CD4-positive, alpha-beta T cell (primary cell): ENCODE measurements at regions of chr19 and their contacts with region 1.

Region 1: DNA sequence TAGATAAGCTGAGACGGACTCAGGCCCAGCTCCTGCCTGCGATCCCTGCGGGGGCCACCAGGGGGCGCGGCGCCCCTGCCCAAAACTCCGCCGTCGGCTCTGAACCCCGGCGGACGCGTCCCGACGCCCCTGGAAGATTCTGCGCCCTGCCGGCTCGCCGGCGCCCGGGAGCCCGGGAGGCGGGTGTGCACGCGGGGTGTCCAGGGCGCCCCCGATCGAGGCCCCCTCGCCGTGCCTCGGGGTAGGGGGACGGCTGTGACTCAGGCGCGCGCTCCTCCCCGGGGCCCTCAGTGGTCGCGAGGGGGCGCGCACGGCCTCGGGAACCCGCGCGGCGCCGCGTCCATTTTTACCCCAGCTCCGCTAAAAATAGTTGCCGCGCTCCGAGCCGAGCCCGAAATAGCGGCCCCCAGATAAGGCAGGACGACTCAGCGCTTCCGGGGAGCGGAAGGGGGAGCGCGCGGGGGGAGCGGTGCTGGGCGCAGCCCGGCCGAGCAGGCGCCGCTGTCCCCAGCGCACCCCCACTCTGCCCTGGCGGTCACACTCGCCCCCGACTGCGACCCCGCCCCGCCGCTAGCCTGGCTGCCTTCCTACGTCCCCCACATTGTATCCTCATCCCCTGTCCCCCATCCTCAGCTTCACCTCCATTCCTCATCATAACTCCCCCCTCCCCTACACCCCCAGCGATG is 16.0 kb upstream of the ERCC1 start:
- DNase-seq: peak; percentile 74 to 93 (median 82)
- ATAC-seq: peak; percentile 66
- H3K4me3 ChIP-seq: peak overlapping the region; percentile 37
- H3K4me3 Mint-ChIP-seq: peak overlapping the region; percentile 80
- H3K27ac ChIP-seq: peak overlapping the region; percentile 52 to 65
- H3K27ac Mint-ChIP-seq: peak overlapping the region; percentile 63
- H3K4me1 ChIP-seq: peaks cover 40% of the 10 kb centered on the region
- H3K4me1 Mint-ChIP-seq: peaks cover 37% of the 10 kb centered on the region
- H3K27me3 ChIP-seq: no peaks in the 10 kb centered on the region
- H3K27me3 Mint-ChIP-seq: no peaks in the 10 kb centered on the region
- CTCF ChIP-seq: peak; percentile 100

Region 2: GRCh38 chr19:45405435-45406225 is 34.1 kb before region 1 on chr19:
- CTCF ChIA-PET with region 1: interaction called, 10 read pairs
- POLR2A ChIA-PET with region 1: no interaction called
- intact Hi-C with region 1: no loop called
- DNase-seq: peak; percentile 68 to 90 (median 80)
- ATAC-seq: peak; percentile 71
- H3K4me3 ChIP-seq: peak overlapping the region; percentile 67
- H3K4me3 Mint-ChIP-seq: peak overlapping the region; percentile 97
- H3K27ac ChIP-seq: peak overlapping the region; percentile 70 to 86
- H3K27ac Mint-ChIP-seq: peak overlapping the region; percentile 79
- H3K4me1 ChIP-seq: peaks cover 45% of the 10 kb centered on the region
- H3K4me1 Mint-ChIP-seq: peaks cover 40% of the 10 kb centered on the region
- H3K27me3 ChIP-seq: peaks cover 27% of the 10 kb centered on the region in 2 experiments
- H3K27me3 Mint-ChIP-seq: peaks cover 44% of the 10 kb centered on the region
- CTCF ChIP-seq: no peak

Region 3: GRCh38 chr19:45450012-45450333 is 10.3 kb after region 1 on chr19:
- CTCF ChIA-PET with region 1: interaction called, 51 read pairs
- POLR2A ChIA-PET with region 1: interaction called, 13 read pairs
- intact Hi-C with region 1: loop called in 1 of 2 experiments (anchors 2 kb)
- DNase-seq: peak in 3 of 14 experiments; percentile 73 to 84 (median 78)
- ATAC-seq: peak; percentile 15
- H3K4me3 ChIP-seq: peak overlapping the region; percentile 77
- H3K4me3 Mint-ChIP-seq: peak overlapping the region; percentile 97
- H3K27ac ChIP-seq: peak overlapping the region; percentile 91 to 99
- H3K27ac Mint-ChIP-seq: peak overlapping the region; percentile 98
- H3K4me1 ChIP-seq: peaks cover 59% of the 10 kb centered on the region
- H3K4me1 Mint-ChIP-seq: peaks cover 55% of the 10 kb centered on the region
- H3K27me3 ChIP-seq: no peaks in the 10 kb centered on the region
- H3K27me3 Mint-ChIP-seq: no peaks in the 10 kb centered on the region
- CTCF ChIP-seq: no peak

Region 4: DNA sequence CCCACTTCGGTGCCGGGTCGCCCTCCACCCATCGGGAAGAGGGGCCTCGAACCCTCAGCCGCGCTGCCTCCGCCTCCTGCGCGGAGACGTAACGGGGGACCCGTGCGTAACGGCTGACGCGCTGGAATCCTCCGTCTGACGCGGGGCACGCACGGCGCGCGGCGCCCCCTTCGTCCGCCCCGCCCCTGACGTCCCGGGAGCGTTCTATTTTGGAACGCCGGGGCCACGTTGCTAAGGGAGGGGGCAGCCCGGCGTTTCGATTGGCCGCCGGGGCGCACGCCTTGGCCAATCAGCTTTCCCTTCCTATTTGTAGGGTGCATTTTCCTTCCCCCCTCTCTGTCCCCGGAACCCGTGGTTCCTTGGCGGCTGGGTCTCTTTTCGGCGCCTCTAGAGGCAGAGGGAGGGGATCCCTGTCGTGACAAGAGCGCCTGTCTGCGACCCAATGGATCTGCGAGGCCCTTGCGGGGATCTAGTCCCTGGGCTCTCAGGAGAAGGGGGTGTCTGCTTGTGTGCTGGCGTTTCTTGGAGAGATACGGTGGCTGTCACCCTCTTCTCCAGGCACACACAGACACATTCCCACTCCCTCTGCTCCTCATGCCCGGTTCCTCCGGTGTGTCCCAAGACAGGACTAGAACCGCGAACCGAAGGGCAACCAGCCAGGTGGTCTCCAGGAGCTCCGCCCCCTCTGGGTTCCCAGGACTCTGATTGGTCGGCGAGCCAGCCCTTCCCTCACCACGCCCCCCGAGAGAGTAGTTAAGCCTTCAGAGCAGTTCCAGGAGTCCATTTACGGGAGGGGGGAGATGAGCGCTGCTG is 29.6 kb after region 1 on chr19:
- CTCF ChIA-PET with region 1: interaction called, 365 read pairs
- POLR2A ChIA-PET with region 1: interaction called, 49 read pairs
- intact Hi-C with region 1: no loop called
- DNase-seq: peak; percentile 80 to 97 (median 92)
- ATAC-seq: peak; percentile 63
- H3K4me3 ChIP-seq: peak overlapping the region; percentile 94
- H3K4me3 Mint-ChIP-seq: peak overlapping the region; percentile 96
- H3K27ac ChIP-seq: peak overlapping the region; percentile 96 to 99
- H3K27ac Mint-ChIP-seq: peak overlapping the region; percentile 98
- H3K4me1 ChIP-seq: peaks cover 39% of the 10 kb centered on the region
- H3K4me1 Mint-ChIP-seq: peaks cover 35% of the 10 kb centered on the region
- H3K27me3 ChIP-seq: peaks cover 4 to 6% of the 10 kb centered on the region in 2 experiments
- H3K27me3 Mint-ChIP-seq: peaks cover 28% of the 10 kb centered on the region
- CTCF ChIP-seq: peak; percentile 22

Region 5: DNA sequence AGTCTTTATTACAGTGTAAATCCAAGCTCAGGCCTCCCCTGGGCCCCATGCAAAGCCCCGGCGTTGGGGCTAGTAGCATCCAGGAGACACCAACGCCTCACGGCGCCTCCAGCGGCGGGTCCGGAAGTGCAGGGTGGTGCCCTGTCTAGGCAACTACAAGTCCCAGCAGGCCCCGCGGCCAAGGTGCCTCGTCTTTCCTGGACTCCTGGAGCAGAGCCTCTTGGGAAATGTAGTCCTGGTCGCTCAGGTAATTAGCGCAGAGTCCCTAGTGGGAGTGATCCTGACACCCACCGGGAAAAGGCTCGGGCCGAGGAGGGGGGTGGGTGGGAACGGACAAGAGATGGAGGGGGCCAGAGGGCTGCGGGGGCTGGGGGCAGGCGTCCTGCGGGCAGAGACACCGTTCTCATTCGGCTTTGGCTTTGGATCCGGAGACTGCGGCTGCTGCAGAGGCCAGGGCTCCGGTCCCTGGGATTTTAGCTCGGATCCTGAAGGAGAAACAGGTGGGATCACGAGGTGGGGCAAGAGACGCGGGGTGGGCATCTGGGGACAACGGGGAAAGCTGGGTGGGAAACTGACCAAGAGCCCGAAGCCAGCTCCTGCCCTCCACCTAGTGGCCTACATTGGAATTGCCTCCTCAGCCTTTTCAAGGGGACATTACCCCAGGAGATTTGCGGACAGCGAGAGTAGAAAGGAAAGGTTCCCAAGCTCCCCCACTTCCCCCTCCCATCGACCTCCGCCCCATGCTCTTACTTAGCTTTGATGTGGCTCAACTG is 45.8 kb after region 1 on chr19:
- CTCF ChIA-PET with region 1: interaction called, 365 read pairs
- POLR2A ChIA-PET with region 1: interaction called, 142 read pairs
- intact Hi-C with region 1: no loop called
- DNase-seq: peak; percentile 95 to 98 (median 97)
- ATAC-seq: peak; percentile 99
- H3K4me3 ChIP-seq: peak overlapping the region; percentile 69
- H3K4me3 Mint-ChIP-seq: peak overlapping the region; percentile 98
- H3K27ac ChIP-seq: no peak overlapping the region
- H3K27ac Mint-ChIP-seq: peak overlapping the region; percentile 47
- H3K4me1 ChIP-seq: peaks cover 14% of the 10 kb centered on the region
- H3K4me1 Mint-ChIP-seq: peaks cover 6% of the 10 kb centered on the region
- H3K27me3 ChIP-seq: no peaks in the 10 kb centered on the region
- H3K27me3 Mint-ChIP-seq: peaks cover 7% of the 10 kb centered on the region
- CTCF ChIP-seq: peak; percentile 86

Region 6: GRCh38 chr19:45558399-45558878 is 118.7 kb after region 1 on chr19:
- CTCF ChIA-PET with region 1: interaction called, 13 read pairs
- POLR2A ChIA-PET with region 1: interaction called, 6 read pairs
- intact Hi-C with region 1: loop called in 1 of 2 experiments (anchors 5 kb)
- DNase-seq: peak; percentile 46 to 89 (median 62)
- ATAC-seq: peak; percentile 98
- H3K4me3 ChIP-seq: no peak overlapping the region
- H3K4me3 Mint-ChIP-seq: no peak overlapping the region
- H3K27ac ChIP-seq: no peak overlapping the region
- H3K27ac Mint-ChIP-seq: peak overlapping the region; percentile 4
- H3K4me1 ChIP-seq: peaks cover 30% of the 10 kb centered on the region
- H3K4me1 Mint-ChIP-seq: peaks cover 41% of the 10 kb centered on the region
- H3K27me3 ChIP-seq: no peaks in the 10 kb centered on the region
- H3K27me3 Mint-ChIP-seq: no peaks in the 10 kb centered on the region
- CTCF ChIP-seq: peak; percentile 62

Region 7: DNA sequence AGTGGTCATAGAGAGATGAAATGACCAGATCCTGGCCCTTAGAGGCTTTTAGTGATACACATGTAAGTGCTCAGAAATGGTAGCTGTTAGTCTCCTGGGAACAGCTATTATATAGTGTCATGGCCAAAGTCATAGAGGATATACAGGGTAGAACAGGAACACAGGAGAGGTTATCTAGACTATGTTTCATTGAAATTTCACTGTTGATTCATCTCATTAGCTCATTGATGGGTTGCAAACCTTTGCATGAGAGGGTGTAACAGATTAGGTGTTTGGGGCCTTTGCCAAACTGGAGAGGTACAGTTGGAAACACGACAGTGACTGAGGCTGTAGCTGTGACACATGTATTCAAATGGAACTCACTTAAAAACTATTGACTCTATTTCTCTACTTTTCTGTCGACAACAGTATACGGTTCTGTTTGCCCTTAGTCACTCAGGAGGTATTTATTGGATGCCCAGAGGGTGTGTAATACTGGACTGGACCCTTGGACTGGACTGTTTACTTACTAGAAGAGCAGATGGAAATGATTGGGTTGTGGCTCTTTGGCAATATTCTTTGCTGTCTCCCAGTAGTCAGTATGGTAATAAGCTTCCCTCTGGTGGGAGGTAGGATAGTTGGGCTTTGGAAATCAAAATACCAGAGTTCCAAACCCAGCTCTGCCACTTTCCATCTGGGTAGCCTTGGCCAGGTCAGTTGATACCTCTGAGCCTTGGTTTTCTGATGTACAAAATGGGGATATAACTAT is 1450.9 kb after region 1 on chr19:
- CTCF ChIA-PET with region 1: no interaction called
- POLR2A ChIA-PET with region 1: no interaction called
- intact Hi-C with region 1: no loop called
- DNase-seq: no peak
- ATAC-seq: no peak
- H3K4me3 ChIP-seq: no peak overlapping the region
- H3K4me3 Mint-ChIP-seq: no peak overlapping the region
- H3K27ac ChIP-seq: no peak overlapping the region
- H3K27ac Mint-ChIP-seq: no peak overlapping the region
- H3K4me1 ChIP-seq: no peaks in the 10 kb centered on the region
- H3K4me1 Mint-ChIP-seq: peaks cover 55% of the 10 kb centered on the region
- H3K27me3 ChIP-seq: no peaks in the 10 kb centered on the region
- H3K27me3 Mint-ChIP-seq: no peaks in the 10 kb centered on the region
- CTCF ChIP-seq: no peak